ENCODE measurements at regions of chr4 and their contacts with region 1.

Region 1: GRCh38 chr4:21012851-21013331 is 312.6 kb downstream of the PACRGL start:
- DNase-seq: peak; percentile 76
- H3K4me3 ChIP-seq: no peak overlapping the region
- H3K27ac ChIP-seq: peak overlapping the region; percentile 89
- H3K4me1 ChIP-seq: peaks cover 31% of the 10 kb centered on the region
- H3K27me3 ChIP-seq: no peaks in the 10 kb centered on the region
- CTCF ChIP-seq: no peak
- POLR2A ChIP-seq: no peak

Region 2: DNA sequence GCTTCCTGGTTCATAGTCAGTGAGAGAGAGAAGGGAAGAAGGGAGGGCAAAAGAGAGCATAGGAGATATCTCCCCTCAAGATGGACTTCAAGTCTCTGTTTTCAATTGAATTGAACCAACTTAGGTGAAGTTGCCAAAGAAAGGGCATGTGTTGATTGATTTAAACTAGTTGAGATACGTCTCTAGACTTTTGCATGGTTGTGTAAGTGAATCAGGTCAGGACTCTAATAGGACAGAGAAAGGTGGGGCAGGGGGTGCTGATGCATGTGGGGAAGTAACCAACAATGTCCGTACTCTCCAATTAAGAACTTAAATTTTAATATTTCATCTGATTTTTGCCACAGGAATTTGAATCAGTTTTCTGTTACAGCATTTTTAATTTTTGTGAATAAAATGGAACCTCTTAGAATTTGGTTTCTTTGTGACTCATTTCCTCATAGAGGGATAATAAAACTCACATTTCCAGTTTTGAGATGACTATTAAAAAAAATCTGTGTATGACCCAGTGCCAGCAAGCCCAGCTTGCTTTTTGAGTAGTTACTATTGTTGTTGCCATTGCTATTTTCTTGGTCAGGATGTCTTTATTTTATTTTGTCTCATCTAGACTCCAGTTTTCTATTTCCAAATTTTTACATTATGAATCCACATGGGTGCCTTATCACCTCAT is 723.9 kb before region 1 on chr4:
- CTCF ChIA-PET with region 1: no interaction called
- POLR2A ChIA-PET with region 1: no interaction called
- dilution Hi-C with region 1: no loop called
- intact Hi-C with region 1: no loop called
- DNase-seq: peak; percentile 42
- H3K4me3 ChIP-seq: no peak overlapping the region
- H3K27ac ChIP-seq: peak overlapping the region; percentile 55
- H3K4me1 ChIP-seq: peaks cover 33% of the 10 kb centered on the region
- H3K27me3 ChIP-seq: no peaks in the 10 kb centered on the region
- CTCF ChIP-seq: no peak
- POLR2A ChIP-seq: no peak

Region 3: DNA sequence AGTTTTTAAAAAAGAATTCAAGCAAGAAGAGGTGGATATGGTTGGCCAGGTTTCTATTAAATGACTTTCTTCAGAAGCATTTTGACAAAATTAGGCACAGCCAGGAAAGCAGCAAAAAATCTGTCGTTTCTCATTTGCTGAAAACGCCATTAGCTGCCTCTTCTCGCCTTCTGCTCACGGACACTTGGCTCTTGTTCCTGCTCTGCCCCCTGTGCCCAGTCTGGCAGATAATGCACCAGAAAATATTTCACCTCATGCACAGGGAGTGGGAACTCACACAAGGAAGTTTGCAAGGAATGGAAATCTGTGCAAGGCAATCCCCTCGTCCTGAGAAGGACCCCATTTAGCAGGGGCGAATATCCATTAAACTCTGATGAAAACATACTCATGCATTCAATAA is 52.6 kb before region 1 on chr4:
- CTCF ChIA-PET with region 1: no interaction called
- POLR2A ChIA-PET with region 1: no interaction called
- dilution Hi-C with region 1: no loop called
- intact Hi-C with region 1: loop called (anchors 2 kb)
- DNase-seq: no peak
- H3K4me3 ChIP-seq: no peak overlapping the region
- H3K27ac ChIP-seq: no peak overlapping the region
- H3K4me1 ChIP-seq: no peaks in the 10 kb centered on the region
- H3K27me3 ChIP-seq: no peaks in the 10 kb centered on the region
- CTCF ChIP-seq: no peak
- POLR2A ChIP-seq: no peak

Region 4: GRCh38 chr4:21113496-21114223 is 100.8 kb after region 1 on chr4:
- CTCF ChIA-PET with region 1: no interaction called
- POLR2A ChIA-PET with region 1: no interaction called
- dilution Hi-C with region 1: no loop called
- intact Hi-C with region 1: loop called (anchors 1 kb)
- DNase-seq: peak; percentile 84
- H3K4me3 ChIP-seq: no peak overlapping the region
- H3K27ac ChIP-seq: peak overlapping the region; percentile 94
- H3K4me1 ChIP-seq: peaks cover 22% of the 10 kb centered on the region
- H3K27me3 ChIP-seq: no peaks in the 10 kb centered on the region
- CTCF ChIP-seq: no peak
- POLR2A ChIP-seq: no peak

Measured in endothelial cell of umbilical vein (primary cell).